Caco-2 (cell line): ENCODE measurements at regions of chr21 and their contacts with region 1.

Region 1: DNA sequence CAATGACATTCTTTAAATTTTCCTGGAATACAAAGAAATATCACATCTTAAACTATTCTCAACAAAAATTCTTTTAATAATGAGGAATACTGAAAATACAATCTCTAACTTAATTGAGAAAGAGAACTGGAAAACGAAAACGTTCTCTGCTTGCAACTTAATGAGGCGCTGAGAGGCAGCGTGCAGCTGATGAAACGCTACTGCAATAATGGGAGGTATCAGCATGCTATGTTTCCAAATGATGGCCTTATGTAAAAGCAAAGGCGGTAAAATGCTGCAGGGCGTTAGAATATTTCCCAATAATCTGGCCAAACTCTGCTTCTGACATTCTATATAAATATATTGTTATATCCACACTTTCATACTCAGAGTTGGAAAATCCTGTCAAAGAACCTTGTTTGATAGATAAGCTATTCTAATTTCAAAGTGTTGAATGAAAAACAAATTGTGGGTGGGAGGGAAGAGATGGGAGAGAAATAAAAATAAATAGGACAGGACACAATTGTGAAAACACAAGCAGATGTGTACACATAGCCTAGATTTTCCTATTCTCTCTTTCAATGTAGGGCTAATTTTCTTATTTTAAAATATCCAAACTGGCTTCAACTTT is 70.9 kb downstream of the APP start:
- DNase-seq: peak in 1 of 2 experiments; percentile 47
- H3K4me3 ChIP-seq: no peak overlapping the region
- H3K4me3 Mint-ChIP-seq: no peak overlapping the region
- H3K27ac Mint-ChIP-seq: no peak overlapping the region
- H3K4me1 ChIP-seq: peaks cover 20% of the 10 kb centered on the region
- H3K4me1 Mint-ChIP-seq: peaks cover 16% of the 10 kb centered on the region
- H3K27me3 ChIP-seq: no peaks in the 10 kb centered on the region
- H3K27me3 Mint-ChIP-seq: no peaks in the 10 kb centered on the region
- CTCF ChIP-seq: no peak

Region 2: DNA sequence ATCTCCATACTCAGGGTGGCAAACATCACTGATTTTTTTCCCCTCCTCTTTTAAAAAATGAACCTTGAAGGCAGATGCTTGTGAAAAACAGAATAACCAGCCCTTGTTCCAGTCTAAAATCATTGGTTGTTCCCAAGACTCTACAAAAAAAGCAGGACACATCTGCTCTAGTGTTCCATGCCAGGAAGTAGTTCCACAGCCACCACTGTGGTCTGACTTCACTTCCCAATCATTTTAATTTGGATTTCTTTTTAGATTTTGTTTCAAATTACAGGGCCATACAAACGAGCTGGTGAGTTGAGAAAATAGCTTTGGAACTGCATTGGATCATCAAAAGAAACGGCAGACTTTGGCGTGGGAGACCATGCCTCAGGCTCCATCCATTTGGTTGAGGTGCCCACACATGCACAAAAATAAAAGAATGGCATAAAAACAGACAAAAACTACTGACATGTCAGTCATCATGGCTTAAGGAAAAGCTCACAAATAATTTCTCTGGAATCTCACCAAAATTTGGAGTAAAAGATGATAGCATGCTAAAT is 155.0 kb before region 1 on chr21:
- CTCF ChIA-PET with region 1: no interaction called
- POLR2A ChIA-PET with region 1: no interaction called
- intact Hi-C with region 1: no loop called
- DNase-seq: no peak
- H3K4me3 ChIP-seq: no peak overlapping the region
- H3K4me3 Mint-ChIP-seq: no peak overlapping the region
- H3K27ac Mint-ChIP-seq: no peak overlapping the region
- H3K4me1 ChIP-seq: no peaks in the 10 kb centered on the region
- H3K4me1 Mint-ChIP-seq: no peaks in the 10 kb centered on the region
- H3K27me3 ChIP-seq: no peaks in the 10 kb centered on the region
- H3K27me3 Mint-ChIP-seq: no peaks in the 10 kb centered on the region
- CTCF ChIP-seq: no peak

Region 3: GRCh38 chr21:26116456-26117011 is 16.8 kb after region 1 on chr21:
- CTCF ChIA-PET with region 1: no interaction called
- POLR2A ChIA-PET with region 1: no interaction called
- intact Hi-C with region 1: loop called (anchors 1 kb)
- DNase-seq: peak; percentile 57 to 61
- H3K4me3 ChIP-seq: no peak overlapping the region
- H3K4me3 Mint-ChIP-seq: peak overlapping the region; percentile 62
- H3K27ac Mint-ChIP-seq: peak overlapping the region; percentile 64
- H3K4me1 ChIP-seq: peaks cover 40% of the 10 kb centered on the region
- H3K4me1 Mint-ChIP-seq: peaks cover 24% of the 10 kb centered on the region
- H3K27me3 ChIP-seq: no peaks in the 10 kb centered on the region
- H3K27me3 Mint-ChIP-seq: no peaks in the 10 kb centered on the region
- CTCF ChIP-seq: no peak

Region 4: DNA sequence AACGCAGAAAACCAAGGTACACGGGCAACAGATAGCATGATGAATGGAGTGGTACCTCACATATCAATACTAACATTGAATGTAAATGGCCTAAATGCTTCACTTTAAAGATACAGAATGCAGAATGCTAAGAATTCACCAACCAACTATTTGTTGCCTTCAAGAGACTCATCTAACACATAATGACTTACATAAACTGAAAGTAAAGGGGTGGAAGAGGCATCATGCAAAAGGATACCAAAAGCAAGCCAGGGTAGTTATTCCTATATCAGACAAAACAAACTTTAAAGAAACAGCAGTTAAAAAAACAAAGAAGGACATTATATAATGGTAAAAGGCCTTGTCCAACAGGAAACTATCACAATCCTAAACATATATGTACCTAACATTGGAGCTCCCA is 207.9 kb after region 1 on chr21:
- CTCF ChIA-PET with region 1: no interaction called
- POLR2A ChIA-PET with region 1: no interaction called
- intact Hi-C with region 1: no loop called
- DNase-seq: no peak
- H3K4me3 ChIP-seq: no peak overlapping the region
- H3K4me3 Mint-ChIP-seq: no peak overlapping the region
- H3K27ac Mint-ChIP-seq: no peak overlapping the region
- H3K4me1 ChIP-seq: no peaks in the 10 kb centered on the region
- H3K4me1 Mint-ChIP-seq: no peaks in the 10 kb centered on the region
- H3K27me3 ChIP-seq: no peaks in the 10 kb centered on the region
- H3K27me3 Mint-ChIP-seq: no peaks in the 10 kb centered on the region
- CTCF ChIP-seq: no peak